ENCODE measurements at regions of chr17 and their contacts with region 1.

Region 1: DNA sequence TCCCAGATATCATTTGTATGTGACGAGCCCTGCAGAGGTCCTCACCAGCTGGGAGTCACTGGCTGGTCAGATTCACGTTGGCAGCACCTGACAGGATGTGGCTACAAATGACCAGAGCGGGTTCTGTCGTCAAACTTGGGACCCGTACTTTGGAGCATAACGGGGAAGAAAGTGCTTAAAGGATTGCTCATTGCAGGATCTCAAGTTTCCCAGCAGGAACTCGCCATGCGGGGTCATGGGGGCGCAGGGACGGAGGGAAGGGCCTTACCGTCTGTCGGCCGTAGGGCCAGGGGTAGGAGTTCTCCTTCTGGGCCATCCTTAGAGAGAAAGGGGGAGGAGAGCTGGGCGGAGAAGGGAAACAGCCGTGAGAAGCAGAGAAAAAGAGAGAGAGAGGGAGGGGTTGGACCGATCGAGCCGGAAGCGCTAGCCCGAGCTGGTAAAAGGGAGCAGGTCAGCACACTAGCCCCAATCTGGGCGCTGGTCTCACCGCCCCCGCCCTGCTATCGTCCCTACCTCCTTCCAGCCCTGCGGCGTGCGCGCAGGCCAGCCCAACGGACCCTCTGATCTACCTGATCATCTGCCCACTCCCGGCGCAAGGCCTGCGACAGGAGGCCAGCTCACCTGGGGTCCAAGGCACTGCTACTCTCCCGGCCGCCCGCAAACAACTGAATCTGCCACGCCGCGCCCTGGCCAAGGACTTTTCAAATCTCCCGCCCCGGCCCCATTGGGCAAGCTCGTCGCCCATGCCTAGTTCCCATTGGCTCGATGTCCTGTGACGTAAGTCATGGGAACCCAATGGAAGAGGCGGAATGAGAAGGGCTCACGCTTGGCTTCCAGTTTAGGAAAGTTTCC is at the start of gene AURKB:
- DNase-seq: peak; percentile 98
- ATAC-seq: peak; percentile 94 to 99
- H3K4me3 ChIP-seq: peak within 1 kb of the TSS; percentile 64
- H3K27ac ChIP-seq: peak within 1 kb of the TSS; percentile 78 to 89
- H3K4me1 ChIP-seq: peaks cover 19% of the 10 kb centered on the region
- CTCF ChIP-seq: no peak
- EP300 ChIP-seq: no peak
- POLR2A ChIP-seq: peak; percentile 50; the same call in 1 of the 2 replicates
- RAD21 ChIP-seq: no peak
- polyA plus RNA-seq, gene AURKB: 51.0 and 59.5 TPM in 2 replicates

Region 2: GRCh38 chr17:8222630-8223356 is 12.7 kb after region 1 on chr17:
- CTCF ChIA-PET with region 1: interaction called, 14 read pairs
- POLR2A ChIA-PET with region 1: interaction called, 31 read pairs
- DNase-seq: peak; percentile 85 to 98
- ATAC-seq: peak; percentile 38 to 64
- H3K4me3 ChIP-seq: peak overlapping the region; percentile 78
- H3K27ac ChIP-seq: peak overlapping the region; percentile 95 to 97
- H3K4me1 ChIP-seq: peaks cover 32% of the 10 kb centered on the region
- CTCF ChIP-seq: no peak
- EP300 ChIP-seq: no peak
- POLR2A ChIP-seq: peak; percentile 85
- RAD21 ChIP-seq: no peak

Region 3: DNA sequence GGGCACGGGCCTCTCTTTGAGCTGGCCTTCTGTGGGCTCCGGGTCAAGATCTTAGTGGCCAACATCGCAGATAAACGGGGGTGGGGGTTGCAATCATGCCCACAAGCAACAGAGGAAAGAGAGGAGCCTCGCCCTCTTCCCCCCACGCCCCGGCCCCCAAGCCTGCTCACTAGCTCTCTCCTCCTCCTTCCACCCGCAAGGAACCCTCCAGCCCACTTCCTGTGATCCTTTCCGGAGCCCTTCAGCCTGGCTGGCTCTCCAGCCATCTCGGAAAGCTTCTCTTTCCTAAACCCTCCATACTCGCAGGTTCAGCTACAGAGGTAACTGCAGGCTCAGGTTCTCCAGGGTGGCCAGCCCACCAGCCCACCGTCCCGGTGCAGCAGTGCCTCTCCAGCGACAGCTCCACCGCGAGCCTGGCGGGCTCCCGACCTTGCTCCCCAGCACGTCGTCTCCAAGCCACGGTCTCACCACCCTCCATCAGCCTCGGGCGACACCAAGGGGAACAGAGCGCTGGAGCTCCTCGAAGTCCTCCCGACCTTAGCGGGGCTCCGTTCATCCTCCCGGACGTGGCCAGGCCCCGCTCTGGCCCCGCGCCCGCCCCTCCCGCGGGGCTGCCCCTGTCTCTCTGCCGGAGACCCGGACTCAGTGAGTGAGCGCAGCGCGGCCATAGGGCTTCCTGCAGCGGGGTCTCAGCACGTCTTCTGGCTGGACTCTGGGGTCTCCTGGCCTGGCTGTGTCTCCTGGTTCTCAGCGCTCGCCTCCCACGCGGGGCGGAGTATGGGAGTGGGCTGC is 116.6 kb after region 1 on chr17:
- CTCF ChIA-PET with region 1: no interaction called
- POLR2A ChIA-PET with region 1: no interaction called
- DNase-seq: no peak
- ATAC-seq: peak; percentile 10 to 54; a peak in 3 of 6 replicates
- H3K4me3 ChIP-seq: no peak overlapping the region
- H3K27ac ChIP-seq: no peak overlapping the region
- H3K4me1 ChIP-seq: no peaks in the 10 kb centered on the region
- CTCF ChIP-seq: no peak
- EP300 ChIP-seq: no peak
- POLR2A ChIP-seq: no peak
- RAD21 ChIP-seq: no peak